ENCODE measurements at regions of chr1 and their contacts with region 1.

Region 1: DNA sequence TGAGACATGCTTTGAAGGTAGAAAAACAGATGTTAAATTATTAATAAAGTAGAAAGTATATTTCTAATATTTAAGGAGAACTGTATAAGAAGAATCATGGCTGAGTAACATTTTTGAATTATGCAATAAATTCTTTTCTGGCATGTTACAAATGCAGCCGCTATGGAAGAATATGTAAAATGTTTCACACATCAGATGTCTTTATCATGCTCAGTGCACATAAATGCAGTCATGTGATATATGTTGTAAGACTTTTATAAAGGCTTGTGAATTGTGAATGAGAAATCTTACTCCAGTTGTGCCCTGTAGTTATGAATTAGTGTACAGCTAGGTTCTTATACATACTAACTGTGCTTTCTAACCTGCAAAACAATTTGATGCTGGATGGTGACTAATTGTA is 53.5 kb downstream of the LRRC8B start:
- DNase-seq: no peak

Region 2: GRCh38 chr1:89524369-89525168 is 53.6 kb before region 1 on chr1 and contains the start of gene LRRC8B:
- intact Hi-C with region 1: loop called in 1 of 2 experiments (anchors 10 kb)
- DNase-seq: peak; percentile 98
- total RNA-seq, gene LRRC8B: 6.0 to 9.9 TPM

Region 3: DNA sequence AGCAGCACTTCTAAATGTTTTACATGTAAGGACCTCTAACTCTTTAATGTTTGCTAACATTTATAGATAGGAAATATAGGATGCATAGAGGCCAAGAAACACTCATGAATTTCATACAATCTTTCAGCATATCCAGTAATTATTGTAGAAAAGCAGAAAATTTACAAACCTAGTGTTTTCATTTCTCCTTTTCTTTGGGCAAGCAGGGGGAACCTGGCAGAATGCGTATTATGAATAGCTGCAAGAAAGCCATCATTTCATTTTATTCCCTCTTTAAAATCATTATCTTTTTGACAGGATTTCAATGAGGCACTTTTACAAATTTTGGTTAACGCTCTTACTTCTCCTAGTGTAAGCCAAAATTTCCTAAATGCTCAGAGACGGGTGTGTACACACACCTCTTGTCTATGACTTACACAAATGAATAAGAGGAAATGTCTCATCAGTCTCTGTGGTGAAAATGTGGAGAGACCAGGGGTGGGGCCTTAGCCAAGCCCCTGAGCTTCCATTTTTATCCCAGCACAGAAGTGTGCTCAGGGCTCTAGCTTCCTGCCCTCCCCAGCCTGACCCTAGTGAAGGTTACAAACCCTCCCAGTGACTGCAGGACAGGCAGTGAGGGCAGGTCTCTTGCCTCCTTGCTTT is 146.3 kb after region 1 on chr1:
- intact Hi-C with region 1: no loop called
- DNase-seq: no peak

Measured in posterior vena cava (tissue), 2 donors.